Activated CD4-positive, alpha-beta T cell treated with anti-CD3 and anti-CD28 coated beads for 36 hours (primary cell): ENCODE measurements at regions of chr11 and their contacts with region 1.

Region 1: DNA sequence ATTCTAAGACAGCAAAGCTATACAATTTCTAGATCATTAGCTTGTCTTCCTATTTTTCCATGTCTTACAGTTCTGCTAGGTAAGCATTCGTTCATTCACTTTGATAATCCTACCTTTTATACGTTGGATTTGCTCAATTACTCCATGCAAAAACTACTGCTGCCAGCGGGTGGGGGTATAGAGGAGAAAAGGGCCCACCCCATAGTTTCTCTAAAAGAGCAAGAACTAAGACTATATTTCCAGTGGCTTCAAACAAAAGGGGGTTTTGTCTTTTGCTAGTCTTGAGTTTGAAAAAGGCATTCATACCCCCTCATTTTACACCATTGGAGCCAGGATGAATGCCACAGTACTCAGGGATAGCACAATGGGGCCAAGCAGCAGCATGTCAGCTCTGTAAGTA is 155.7 kb downstream of the WT1 start:
- DNase-seq: no peak
- ATAC-seq: no peak
- H3K4me3 Mint-ChIP-seq: no peak overlapping the region
- H3K27ac Mint-ChIP-seq: no peak overlapping the region
- H3K4me1 Mint-ChIP-seq: no peaks in the 10 kb centered on the region
- H3K27me3 Mint-ChIP-seq: peaks cover 22% of the 10 kb centered on the region

Region 2: DNA sequence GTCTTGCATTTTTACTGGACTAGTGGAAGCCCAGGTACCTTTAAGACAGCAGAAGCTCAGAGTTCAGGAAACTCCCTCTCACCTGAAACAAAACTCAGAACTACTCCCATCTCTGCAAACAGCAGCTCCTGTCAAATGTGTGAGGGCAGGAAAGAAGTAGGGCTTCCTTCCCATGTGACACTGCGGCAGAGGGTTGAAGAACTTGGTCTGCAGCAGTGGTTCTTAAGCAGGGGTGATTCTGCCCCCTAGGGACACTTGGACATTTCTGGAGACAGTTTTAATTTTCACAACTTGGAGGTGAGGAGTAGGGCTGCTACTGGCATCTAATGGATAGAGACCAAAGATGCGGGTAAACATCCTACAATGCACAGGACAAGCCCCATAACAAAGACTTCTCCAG is 125.4 kb before region 1 on chr11:
- CTCF ChIA-PET with region 1: no interaction called
- POLR2A ChIA-PET with region 1: no interaction called
- intact Hi-C with region 1: no loop called
- DNase-seq: no peak
- ATAC-seq: no peak
- H3K4me3 Mint-ChIP-seq: no peak overlapping the region
- H3K27ac Mint-ChIP-seq: no peak overlapping the region
- H3K4me1 Mint-ChIP-seq: no peaks in the 10 kb centered on the region
- H3K27me3 Mint-ChIP-seq: peaks cover 33% of the 10 kb centered on the region

Region 3: DNA sequence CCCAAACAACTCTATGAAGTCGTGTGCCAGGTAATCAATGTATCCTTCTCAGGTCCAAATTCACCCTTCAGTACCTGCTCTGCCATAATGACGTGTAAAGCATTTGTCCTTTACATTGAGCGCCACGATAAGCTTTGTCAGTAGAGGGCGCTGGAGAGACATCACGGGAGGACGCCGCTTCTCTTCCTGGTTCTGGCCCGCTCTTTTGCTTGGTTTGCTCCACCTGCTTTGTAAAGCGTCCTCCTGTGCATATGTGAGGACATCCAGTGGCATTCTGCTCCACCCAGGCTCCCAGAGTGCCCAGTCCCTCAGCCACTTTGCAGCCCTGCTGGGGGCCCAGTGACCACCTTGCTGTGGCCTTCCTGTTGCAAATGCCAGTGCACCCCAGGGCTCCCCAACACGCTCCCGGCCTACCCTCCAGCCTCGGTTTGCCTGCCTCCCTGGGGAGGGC is 94.6 kb after region 1 on chr11:
- CTCF ChIA-PET with region 1: no interaction called
- POLR2A ChIA-PET with region 1: interaction called, 18 read pairs
- intact Hi-C with region 1: no loop called
- DNase-seq: peak; percentile 76
- ATAC-seq: peak; percentile 57
- H3K4me3 Mint-ChIP-seq: no peak overlapping the region
- H3K27ac Mint-ChIP-seq: no peak overlapping the region
- H3K4me1 Mint-ChIP-seq: no peaks in the 10 kb centered on the region
- H3K27me3 Mint-ChIP-seq: peaks cover 2% of the 10 kb centered on the region